CD4-positive, alpha-beta memory T cell (primary cell): ENCODE measurements at regions of chr4 and their contacts with region 1.

Region 1: GRCh38 chr4:75673027-75673958 is at the start of gene G3BP2:
- DNase-seq: peak; percentile 95 to 99 (median 98)
- H3K4me3 ChIP-seq: peak within 1 kb of the TSS; percentile 90 to 97
- H3K4me3 Mint-ChIP-seq: peak within 1 kb of the TSS; percentile 88 to 99 (median 98)
- H3K27ac ChIP-seq: peak within 1 kb of the TSS; percentile 97
- H3K27ac Mint-ChIP-seq: peak within 1 kb of the TSS; percentile 97 to 100 (median 98)
- H3K4me1 ChIP-seq: peaks cover 45% of the 10 kb centered on the region
- H3K4me1 Mint-ChIP-seq: peaks cover 32 to 61% (median 42%) of the 10 kb centered on the region in 4 donors
- H3K27me3 ChIP-seq: no peaks in the 10 kb centered on the region
- H3K27me3 Mint-ChIP-seq: no peaks in the 10 kb centered on the region
- total RNA-seq, gene G3BP2: 150 to 165 TPM

Region 2: DNA sequence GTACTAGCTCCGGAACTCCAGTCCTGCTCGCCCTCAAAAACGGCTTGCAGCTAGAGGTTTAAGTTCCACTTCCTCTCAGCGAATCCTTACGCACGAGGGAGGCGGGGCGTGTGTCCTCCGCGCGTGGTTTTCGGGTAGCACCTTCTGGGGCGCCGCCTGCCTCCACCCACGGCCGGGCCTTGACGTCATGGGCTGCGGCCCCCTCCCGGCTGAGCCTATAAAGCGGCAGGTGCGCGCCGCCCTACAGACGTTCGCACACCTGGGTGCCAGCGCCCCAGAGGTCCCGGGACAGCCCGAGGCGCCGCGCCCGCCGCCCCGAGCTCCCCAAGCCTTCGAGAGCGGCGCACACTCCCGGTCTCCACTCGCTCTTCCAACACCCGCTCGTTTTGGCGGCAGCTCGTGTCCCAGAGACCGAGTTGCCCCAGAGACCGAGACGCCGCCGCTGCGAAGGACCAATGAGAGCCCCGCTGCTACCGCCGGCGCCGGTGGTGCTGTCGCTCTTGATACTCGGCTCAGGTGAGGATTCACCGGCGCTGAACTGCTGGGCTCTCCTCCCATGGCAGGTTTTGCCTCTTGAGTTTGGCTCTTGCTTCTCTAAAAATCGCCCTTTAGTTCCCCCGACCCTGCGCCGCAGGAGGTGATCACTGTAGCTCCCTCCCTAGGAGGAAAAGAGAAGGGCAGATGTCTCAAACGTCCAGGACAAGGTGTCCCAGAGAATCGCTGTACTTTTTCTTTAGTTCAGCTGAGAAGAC is 1228.2 kb before region 1 on chr4 and contains the start of gene AREG:
- CTCF ChIA-PET with region 1: no interaction called
- POLR2A ChIA-PET with region 1: no interaction called
- intact Hi-C with region 1: loop called (anchors 10 kb)
- DNase-seq: peak; percentile 90 to 95 (median 92)
- H3K4me3 ChIP-seq: peak within 1 kb of the TSS; percentile 7 to 67
- H3K4me3 Mint-ChIP-seq: peak within 1 kb of the TSS; percentile 90 to 97 (median 94)
- H3K27ac ChIP-seq: peak within 1 kb of the TSS; percentile 84
- H3K27ac Mint-ChIP-seq: peak within 1 kb of the TSS; percentile 93 to 99 (median 97)
- H3K4me1 ChIP-seq: peaks cover 10% of the 10 kb centered on the region
- H3K4me1 Mint-ChIP-seq: peaks cover 5 to 14% (median 9%) of the 10 kb centered on the region in 4 donors
- H3K27me3 ChIP-seq: no peaks in the 10 kb centered on the region
- H3K27me3 Mint-ChIP-seq: peaks cover 0 to 2% of the 10 kb centered on the region in 2 donors
- total RNA-seq, gene AREG: 0.44 to 0.52 TPM

Region 3: DNA sequence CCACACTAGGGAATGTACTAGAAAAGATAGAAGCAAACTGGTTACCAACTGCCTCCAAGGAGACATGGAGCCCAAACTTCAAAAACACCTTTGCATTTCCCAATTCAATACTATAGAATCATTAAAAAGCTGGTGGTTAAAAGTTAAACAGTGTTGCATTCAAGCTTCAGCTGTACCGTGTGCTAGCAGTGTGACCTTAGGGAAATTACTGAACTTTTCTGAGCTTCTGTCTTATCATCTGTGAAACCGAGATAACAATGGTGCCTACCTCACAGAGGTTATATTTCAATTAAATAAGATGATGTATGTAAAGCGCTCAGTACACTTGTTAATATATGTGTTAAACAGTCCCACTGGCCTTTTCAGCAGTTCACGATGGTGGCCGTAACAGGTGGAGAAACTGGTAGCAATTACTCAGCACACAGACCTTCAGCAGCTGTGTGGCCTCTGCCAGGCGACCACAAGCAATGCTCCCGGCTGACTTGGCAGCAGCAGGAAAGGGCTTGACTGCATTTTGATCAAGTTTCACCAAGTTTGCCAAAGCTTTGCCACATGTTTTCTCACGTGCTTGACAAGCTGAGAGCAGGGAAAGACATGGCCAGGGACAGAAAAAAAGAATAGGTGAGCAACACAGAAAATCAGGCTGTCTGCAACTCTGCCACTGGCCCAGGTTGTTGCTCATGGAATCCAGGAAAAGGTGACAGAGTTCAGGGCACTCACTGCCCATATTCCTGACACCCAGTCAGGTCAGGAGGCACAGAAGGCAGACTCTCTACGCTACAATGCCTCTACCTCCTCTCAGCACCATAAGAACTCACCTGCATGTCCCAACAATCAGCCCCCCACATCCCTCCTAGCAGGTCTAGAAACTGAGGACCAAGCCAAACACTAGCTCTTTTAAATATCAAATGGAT is 668.3 kb before region 1 on chr4:
- CTCF ChIA-PET with region 1: no interaction called
- POLR2A ChIA-PET with region 1: no interaction called
- intact Hi-C with region 1: no loop called
- DNase-seq: no peak
- H3K4me3 ChIP-seq: no peak overlapping the region
- H3K4me3 Mint-ChIP-seq: no peak overlapping the region
- H3K27ac ChIP-seq: no peak overlapping the region
- H3K27ac Mint-ChIP-seq: no peak overlapping the region
- H3K4me1 ChIP-seq: no peaks in the 10 kb centered on the region
- H3K4me1 Mint-ChIP-seq: no peaks in the 10 kb centered on the region
- H3K27me3 ChIP-seq: no peaks in the 10 kb centered on the region
- H3K27me3 Mint-ChIP-seq: no peaks in the 10 kb centered on the region

Region 4: DNA sequence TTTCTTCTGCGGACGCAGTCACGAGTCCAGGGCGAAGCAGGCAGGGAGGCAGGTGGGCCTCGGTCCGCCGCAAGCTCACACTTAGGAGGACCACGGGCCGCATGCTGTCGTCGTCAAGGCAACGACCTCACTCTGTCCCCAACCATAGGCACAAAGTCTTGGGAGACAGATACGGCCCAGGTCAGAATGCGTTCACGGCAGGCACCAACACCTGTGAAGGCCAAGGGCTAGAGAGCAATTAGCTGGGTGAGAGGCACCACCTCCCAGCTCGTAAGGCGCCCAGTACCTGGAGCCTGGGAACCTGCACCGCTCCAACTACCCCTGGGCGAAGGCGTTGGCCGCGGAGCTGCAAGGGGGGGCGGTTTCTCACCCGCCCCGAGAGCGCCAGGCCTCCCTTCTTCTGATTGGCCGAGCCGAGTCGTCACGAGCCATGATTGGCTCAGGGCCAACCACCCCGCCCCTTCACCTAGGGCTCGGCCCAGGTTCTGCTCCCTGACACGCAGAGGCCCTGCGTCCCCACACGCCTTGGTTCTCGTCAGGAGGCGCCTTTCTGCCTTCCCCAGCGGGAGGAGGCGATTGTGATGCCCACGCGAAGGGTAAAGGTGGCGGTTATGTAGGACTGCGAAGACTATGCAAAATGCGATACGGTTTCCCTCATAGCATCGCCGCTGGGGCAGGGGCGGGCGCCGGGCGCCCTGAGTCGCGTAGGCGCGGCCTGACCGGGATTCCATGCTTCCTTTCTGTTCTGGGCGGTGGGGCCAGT is 42.9 kb before region 1 on chr4 and contains the start of gene CDKL2:
- CTCF ChIA-PET with region 1: no interaction called
- POLR2A ChIA-PET with region 1: interaction called, 21 read pairs
- intact Hi-C with region 1: loop called (anchors 1 kb)
- DNase-seq: peak; percentile 91 to 93 (median 92)
- H3K4me3 ChIP-seq: peak within 1 kb of the TSS; percentile 33 to 66
- H3K4me3 Mint-ChIP-seq: peak within 1 kb of the TSS; percentile 88 to 95 (median 92)
- H3K27ac ChIP-seq: peak within 1 kb of the TSS; percentile 29
- H3K27ac Mint-ChIP-seq: peak within 1 kb of the TSS; percentile 26 to 93 (median 89)
- H3K4me1 ChIP-seq: peaks cover 6% of the 10 kb centered on the region
- H3K4me1 Mint-ChIP-seq: peaks cover 4 to 23% (median 11%) of the 10 kb centered on the region in 4 donors
- H3K27me3 ChIP-seq: no peaks in the 10 kb centered on the region
- H3K27me3 Mint-ChIP-seq: no peaks in the 10 kb centered on the region
- total RNA-seq, gene CDKL2: 0.35 to 0.39 TPM

Region 5: GRCh38 chr4:75653845-75654503 is 19.3 kb before region 1 on chr4:
- CTCF ChIA-PET with region 1: interaction called, 10 read pairs
- POLR2A ChIA-PET with region 1: interaction called, 38 read pairs
- intact Hi-C with region 1: loop called (anchors 2 kb)
- DNase-seq: no peak
- H3K4me3 ChIP-seq: no peak overlapping the region
- H3K4me3 Mint-ChIP-seq: no peak overlapping the region
- H3K27ac ChIP-seq: peak overlapping the region; percentile 18
- H3K27ac Mint-ChIP-seq: peak overlapping the region in 5 of 7 donors; percentile 61 to 93 (median 81)
- H3K4me1 ChIP-seq: peaks cover 46% of the 10 kb centered on the region
- H3K4me1 Mint-ChIP-seq: peaks cover 28 to 55% (median 35%) of the 10 kb centered on the region in 4 donors
- H3K27me3 ChIP-seq: no peaks in the 10 kb centered on the region
- H3K27me3 Mint-ChIP-seq: no peaks in the 10 kb centered on the region

Region 6: DNA sequence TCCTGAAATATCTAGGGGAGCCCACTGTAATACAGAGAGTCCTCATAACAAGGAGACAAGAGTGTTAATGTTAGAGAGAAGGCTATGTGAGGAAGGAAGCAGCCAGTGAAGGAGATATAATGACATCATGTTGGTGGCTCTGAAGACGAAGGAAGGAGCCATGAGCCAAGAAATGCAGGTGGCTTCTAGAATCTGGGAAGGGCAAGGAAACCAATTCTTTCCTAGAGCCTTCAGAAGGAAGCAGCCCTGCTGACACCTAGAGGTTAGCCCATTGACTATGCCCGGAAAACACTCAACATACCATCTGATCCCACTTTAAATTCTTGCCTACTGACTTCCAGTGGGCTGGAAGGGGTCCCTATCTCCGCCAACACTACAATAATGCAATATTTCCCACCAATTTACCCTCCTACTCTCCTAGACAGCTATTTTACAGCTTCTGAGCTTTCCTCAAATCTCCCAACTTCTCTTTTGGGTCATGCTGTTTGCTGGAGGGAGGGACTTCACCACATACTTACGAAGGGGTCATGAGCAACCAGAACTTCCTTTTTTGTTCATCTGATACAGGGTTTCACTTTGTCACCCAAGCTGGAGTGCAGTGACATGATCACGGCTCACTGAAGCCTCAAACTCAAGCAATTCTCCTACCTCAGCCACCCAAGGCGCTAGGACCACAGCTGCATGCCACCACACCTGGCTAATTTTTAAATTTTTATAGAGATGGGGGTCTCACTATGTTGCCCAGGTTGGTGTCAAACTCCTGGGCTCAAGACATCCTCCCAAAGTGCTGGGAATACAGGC is 25.1 kb after region 1 on chr4:
- CTCF ChIA-PET with region 1: no interaction called
- POLR2A ChIA-PET with region 1: interaction called, 10 read pairs
- intact Hi-C with region 1: no loop called
- DNase-seq: peak in 3 of 5 donors; percentile 19 to 39 (median 27)
- H3K4me3 ChIP-seq: no peak overlapping the region
- H3K4me3 Mint-ChIP-seq: peak overlapping the region in 7 of 8 donors; percentile 4 to 62 (median 34)
- H3K27ac ChIP-seq: peak overlapping the region; percentile 34
- H3K27ac Mint-ChIP-seq: peak overlapping the region; percentile 4 to 94 (median 88)
- H3K4me1 ChIP-seq: peaks cover 14% of the 10 kb centered on the region
- H3K4me1 Mint-ChIP-seq: peaks cover 20 to 35% (median 28%) of the 10 kb centered on the region in 4 donors
- H3K27me3 ChIP-seq: no peaks in the 10 kb centered on the region
- H3K27me3 Mint-ChIP-seq: no peaks in the 10 kb centered on the region

Region 7: DNA sequence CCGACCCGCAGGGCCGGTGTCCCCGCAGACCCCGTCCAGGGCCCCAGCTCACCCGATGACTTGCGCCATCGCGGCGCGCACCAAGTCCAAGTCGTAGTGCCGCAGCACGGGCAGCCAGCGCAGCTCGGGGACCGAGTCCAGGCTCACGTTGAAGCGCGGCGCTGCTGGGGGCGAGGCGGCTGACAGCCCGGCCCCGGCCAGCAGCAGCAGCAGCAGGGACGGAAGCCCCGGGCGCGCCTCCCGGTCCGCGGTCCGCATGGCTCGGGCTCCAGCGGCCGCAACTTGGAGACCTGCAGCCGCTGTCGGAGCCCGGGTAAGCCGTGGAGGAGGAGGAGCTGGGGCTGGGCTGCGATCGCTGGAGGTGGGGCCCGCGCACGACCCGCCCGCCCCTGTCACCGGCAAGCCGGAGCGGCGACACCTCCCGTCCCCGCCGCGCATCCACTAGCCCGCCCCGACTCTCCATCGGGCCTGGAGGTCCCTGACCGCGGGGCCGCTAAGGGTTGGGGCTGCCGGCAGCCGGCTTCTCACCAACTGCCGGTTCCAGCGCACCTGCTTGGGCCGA is 267.5 kb after region 1 on chr4 and contains the start of gene NAAA:
- CTCF ChIA-PET with region 1: no interaction called
- POLR2A ChIA-PET with region 1: interaction called, 6 read pairs
- intact Hi-C with region 1: loop called (anchors 1 kb)
- DNase-seq: peak; percentile 73 to 84 (median 80)
- H3K4me3 ChIP-seq: peak within 1 kb of the TSS; percentile 80 to 98
- H3K4me3 Mint-ChIP-seq: peak within 1 kb of the TSS; percentile 97 to 99 (median 98)
- H3K27ac ChIP-seq: peak within 1 kb of the TSS; percentile 75
- H3K27ac Mint-ChIP-seq: peak within 1 kb of the TSS; percentile 96 to 98 (median 98)
- H3K4me1 ChIP-seq: peaks cover 19% of the 10 kb centered on the region
- H3K4me1 Mint-ChIP-seq: peaks cover 10 to 35% (median 19%) of the 10 kb centered on the region in 4 donors
- H3K27me3 ChIP-seq: no peaks in the 10 kb centered on the region
- H3K27me3 Mint-ChIP-seq: no peaks in the 10 kb centered on the region
- total RNA-seq, gene NAAA: 86.1 to 92.2 TPM